Endothelial cell of umbilical vein (primary cell): ENCODE measurements at regions of chr11 and their contacts with region 1.

Region 1: GRCh38 chr11:108871152-108871551 is 206.3 kb downstream of the DDX10 start:
- DNase-seq: peak; percentile 81
- H3K4me3 ChIP-seq: peak overlapping the region in 1 of 3 experiments; percentile 74
- H3K27ac ChIP-seq: peak overlapping the region; percentile 100
- H3K4me1 ChIP-seq: peaks cover 63% of the 10 kb centered on the region
- H3K27me3 ChIP-seq: no peaks in the 10 kb centered on the region
- CTCF ChIP-seq: peak; percentile 55 to 63
- POLR2A ChIP-seq: no peak

Region 2: GRCh38 chr11:108467091-108467823 is 403.9 kb before region 1 on chr11 and contains the start of gene C11orf65:
- CTCF ChIA-PET with region 1: no interaction called
- POLR2A ChIA-PET with region 1: no interaction called
- dilution Hi-C with region 1: no loop called
- intact Hi-C with region 1: loop called (anchors 2 kb)
- DNase-seq: peak; percentile 99
- H3K4me3 ChIP-seq: peak within 1 kb of the TSS; percentile 38 to 86 (median 62)
- H3K27ac ChIP-seq: peak within 1 kb of the TSS; percentile 97
- H3K4me1 ChIP-seq: peaks cover 3% of the 10 kb centered on the region
- H3K27me3 ChIP-seq: no peaks in the 10 kb centered on the region
- CTCF ChIP-seq: no peak
- POLR2A ChIP-seq: peak; percentile 97
- total RNA-seq, gene C11orf65: not detected in 2 replicates

Region 3: DNA sequence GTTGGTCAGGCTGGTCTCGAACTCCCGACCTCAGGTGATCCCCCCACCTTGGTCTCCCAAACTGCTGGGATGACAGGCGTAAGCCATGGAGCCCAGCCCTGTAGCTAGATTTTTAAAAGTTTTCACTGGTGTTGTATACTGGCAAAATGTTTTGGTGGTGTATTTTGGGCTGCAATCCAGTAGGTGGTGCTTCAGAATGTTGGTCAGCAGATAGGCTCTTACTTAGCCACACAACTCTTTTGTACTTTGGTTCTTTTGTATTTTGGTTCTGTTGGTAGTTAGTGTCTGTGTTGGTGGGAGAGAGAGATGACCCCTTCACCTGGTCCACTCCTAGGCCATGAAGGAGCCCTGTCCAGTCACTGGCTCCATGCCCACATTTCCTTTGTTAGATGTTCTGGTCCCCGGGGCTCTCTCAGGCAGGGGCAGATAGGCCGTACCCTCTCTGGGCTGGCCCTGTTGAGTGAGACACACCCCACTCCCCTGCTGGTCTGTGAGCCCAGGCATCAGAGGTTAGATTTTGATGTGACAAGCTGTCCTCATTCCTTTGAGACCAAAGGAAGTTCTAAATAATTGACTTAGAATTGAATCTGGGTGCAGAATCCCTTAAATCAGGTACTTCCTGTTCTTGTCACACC is 82.5 kb before region 1 on chr11:
- CTCF ChIA-PET with region 1: interaction called, 38 read pairs
- POLR2A ChIA-PET with region 1: no interaction called
- dilution Hi-C with region 1: no loop called
- intact Hi-C with region 1: loop called (anchors 2 kb)
- DNase-seq: peak; percentile 58
- H3K4me3 ChIP-seq: no peak overlapping the region
- H3K27ac ChIP-seq: no peak overlapping the region
- H3K4me1 ChIP-seq: no peaks in the 10 kb centered on the region
- H3K27me3 ChIP-seq: no peaks in the 10 kb centered on the region
- CTCF ChIP-seq: peak; percentile 43 to 55
- POLR2A ChIP-seq: no peak

Region 4: GRCh38 chr11:108895579-108896480 is 24.7 kb after region 1 on chr11:
- CTCF ChIA-PET with region 1: interaction called, 9 read pairs
- POLR2A ChIA-PET with region 1: no interaction called
- dilution Hi-C with region 1: no loop called
- intact Hi-C with region 1: loop called (anchors 1 kb)
- DNase-seq: peak; percentile 83
- H3K4me3 ChIP-seq: peak overlapping the region in 1 of 3 experiments; percentile 57
- H3K27ac ChIP-seq: peak overlapping the region; percentile 95
- H3K4me1 ChIP-seq: peaks cover 34% of the 10 kb centered on the region
- H3K27me3 ChIP-seq: no peaks in the 10 kb centered on the region
- CTCF ChIP-seq: no peak
- POLR2A ChIP-seq: no peak

Region 5: GRCh38 chr11:108929241-108929640 is 58.1 kb after region 1 on chr11:
- CTCF ChIA-PET with region 1: interaction called, 4 read pairs
- POLR2A ChIA-PET with region 1: no interaction called
- dilution Hi-C with region 1: no loop called
- intact Hi-C with region 1: loop called (anchors 2 kb)
- DNase-seq: peak; percentile 82
- H3K4me3 ChIP-seq: no peak overlapping the region
- H3K27ac ChIP-seq: peak overlapping the region; percentile 85
- H3K4me1 ChIP-seq: peaks cover 24% of the 10 kb centered on the region
- H3K27me3 ChIP-seq: no peaks in the 10 kb centered on the region
- CTCF ChIP-seq: no peak
- POLR2A ChIP-seq: no peak

Region 6: DNA sequence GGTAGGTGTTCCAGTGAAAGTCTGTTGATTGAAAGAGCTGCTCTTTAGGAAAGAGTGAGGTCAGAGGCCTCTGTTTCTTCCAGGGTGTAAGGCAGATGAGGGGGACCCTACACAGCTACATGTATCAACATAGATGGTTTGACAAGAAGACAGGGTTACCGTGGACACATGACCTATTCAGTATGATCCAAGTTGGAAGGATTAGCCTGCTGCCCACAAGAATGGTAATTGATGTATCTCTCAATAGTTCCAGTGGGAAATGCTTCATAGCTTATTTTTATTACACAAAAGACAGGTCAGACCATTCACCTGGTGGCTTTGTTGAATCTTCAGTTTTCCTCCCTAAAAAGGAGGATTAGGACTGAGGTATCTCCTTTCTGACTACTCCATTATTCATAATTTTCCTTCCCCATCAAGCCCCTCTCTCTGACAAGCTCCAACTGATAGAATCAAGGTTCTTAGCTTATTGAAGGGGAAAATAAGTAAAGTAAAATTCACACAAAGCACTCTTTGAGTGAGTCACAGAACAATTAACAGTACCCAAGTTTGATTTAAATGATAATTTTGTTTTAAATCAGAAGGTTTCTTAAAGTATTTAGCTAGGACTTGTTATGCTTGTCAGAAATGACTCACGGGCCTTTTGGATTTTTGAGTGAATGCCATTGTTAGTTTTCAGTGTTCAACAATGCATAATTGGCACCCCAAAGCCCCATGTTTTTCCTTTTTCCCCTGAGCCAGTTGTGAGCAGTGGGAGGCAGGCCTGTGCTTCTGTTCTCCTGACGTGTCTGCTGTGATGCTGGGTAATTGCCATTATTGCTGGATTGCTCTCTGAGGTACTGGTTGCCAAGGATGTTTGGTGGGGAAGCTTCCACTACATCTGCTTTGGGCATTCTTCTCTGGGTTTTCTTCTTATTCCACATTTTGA is 167.0 kb after region 1 on chr11:
- CTCF ChIA-PET with region 1: no interaction called
- POLR2A ChIA-PET with region 1: no interaction called
- dilution Hi-C with region 1: no loop called
- intact Hi-C with region 1: loop called (anchors 2 kb)
- DNase-seq: peak; percentile 85
- H3K4me3 ChIP-seq: no peak overlapping the region
- H3K27ac ChIP-seq: peak overlapping the region; percentile 21
- H3K4me1 ChIP-seq: peaks cover 44% of the 10 kb centered on the region
- H3K27me3 ChIP-seq: no peaks in the 10 kb centered on the region
- CTCF ChIP-seq: no peak
- POLR2A ChIP-seq: no peak